Left colon (tissue), 2 donors: ENCODE measurements at regions of chr19 and their contacts with region 1.

Region 1: DNA sequence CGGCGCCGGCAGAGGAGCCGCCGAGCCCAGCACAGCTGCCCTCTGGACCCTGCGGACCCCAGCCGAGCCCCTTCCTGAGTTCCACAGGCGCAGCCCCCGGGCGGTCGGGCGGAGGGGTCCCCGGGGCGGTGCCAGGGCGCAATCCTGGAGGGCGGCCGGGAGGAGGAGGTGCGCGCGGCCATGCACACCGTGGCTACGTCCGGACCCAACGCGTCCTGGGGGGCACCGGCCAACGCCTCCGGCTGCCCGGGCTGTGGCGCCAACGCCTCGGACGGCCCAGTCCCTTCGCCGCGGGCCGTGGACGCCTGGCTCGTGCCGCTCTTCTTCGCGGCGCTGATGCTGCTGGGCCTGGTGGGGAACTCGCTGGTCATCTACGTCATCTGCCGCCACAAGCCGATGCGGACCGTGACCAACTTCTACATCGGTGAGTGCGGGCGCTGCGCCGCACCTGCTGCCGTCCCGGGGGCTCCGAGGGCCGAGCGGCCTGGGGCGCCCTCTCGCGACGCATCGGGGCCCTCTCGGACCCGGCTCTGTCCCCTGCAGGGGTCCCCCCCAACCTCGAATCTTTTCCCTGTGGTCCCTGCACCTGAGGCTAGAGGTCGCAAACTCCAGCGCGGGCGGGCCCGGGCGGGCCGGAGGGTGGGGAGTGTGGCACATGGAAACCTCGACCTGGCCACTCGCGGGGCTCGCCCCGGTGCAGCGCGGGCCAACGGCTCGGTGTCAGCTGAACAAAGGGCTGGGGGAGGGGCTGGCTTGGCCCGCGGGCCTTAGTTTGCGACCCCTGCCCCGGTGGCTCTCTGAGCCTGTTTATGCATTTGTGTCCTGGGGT is at the start of gene KISS1R:
- DNase-seq: peak; percentile 29 to 53
- ATAC-seq: peak; percentile 17
- total RNA-seq, gene KISS1R: not detected

Region 2: DNA sequence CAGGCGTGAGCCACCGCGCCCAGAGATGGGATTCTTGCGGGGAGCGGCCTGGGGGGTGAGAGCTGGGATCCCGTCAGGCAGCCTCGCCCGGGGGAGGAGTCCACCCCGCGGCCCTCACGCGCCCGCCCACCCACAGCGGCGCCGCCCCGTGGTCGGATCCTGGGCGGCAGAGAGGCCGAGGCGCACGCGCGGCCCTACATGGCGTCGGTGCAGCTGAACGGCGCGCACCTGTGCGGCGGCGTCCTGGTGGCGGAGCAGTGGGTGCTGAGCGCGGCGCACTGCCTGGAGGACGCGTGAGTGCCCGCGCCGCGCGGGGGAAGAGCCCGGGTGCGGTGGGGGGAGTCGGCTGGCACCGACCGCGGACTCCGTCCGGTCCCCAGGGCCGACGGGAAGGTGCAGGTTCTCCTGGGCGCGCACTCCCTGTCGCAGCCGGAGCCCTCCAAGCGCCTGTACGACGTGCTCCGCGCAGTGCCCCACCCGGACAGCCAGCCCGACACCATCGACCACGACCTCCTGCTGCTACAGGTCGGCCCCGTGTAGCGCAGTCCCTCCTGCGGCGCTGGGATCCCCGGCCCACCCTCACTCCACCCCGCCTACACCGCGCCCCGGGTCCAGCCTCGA is 56.9 kb before region 1 on chr19:
- intact Hi-C with region 1: loop called (anchors 2 to 5 kb)
- DNase-seq: peak; percentile 78 to 83
- ATAC-seq: peak; percentile 71